IMR-90 (cell line): ENCODE measurements at regions of chr2 and their contacts with region 1.

Region 1: GRCh38 chr2:168346725-168347477 is 99.5 kb upstream of the STK39 start:
- DNase-seq: peak; percentile 63
- ATAC-seq: peak; percentile 91
- H3K4me3 ChIP-seq: peak overlapping the region; percentile 69
- H3K27ac ChIP-seq: peak overlapping the region; percentile 51; the same call in 1 of the 2 replicates
- H3K4me1 ChIP-seq: no peaks in the 10 kb centered on the region
- H3K27me3 ChIP-seq: no peaks in the 10 kb centered on the region; the same call in 1 of the 2 replicates
- CTCF ChIP-seq: peak; percentile 86
- POLR2A ChIP-seq: peak; percentile 28; the same call in 1 of the 2 replicates
- RAD21 ChIP-seq: peak; percentile 90

Region 2: GRCh38 chr2:168155046-168155445 is 191.9 kb before region 1 on chr2:
- CTCF ChIA-PET with region 1: no interaction called
- POLR2A ChIA-PET with region 1: no interaction called
- dilution Hi-C with region 1: no loop called
- in situ Hi-C with region 1: no loop called
- intact Hi-C with region 1: no loop called
- DNase-seq: peak; percentile 79
- ATAC-seq: peak; percentile 70
- H3K4me3 ChIP-seq: no peak overlapping the region
- H3K27ac ChIP-seq: peak overlapping the region; percentile 83; the same call in 1 of the 2 replicates
- H3K4me1 ChIP-seq: peaks cover 15% of the 10 kb centered on the region
- H3K27me3 ChIP-seq: no peaks in the 10 kb centered on the region
- CTCF ChIP-seq: no peak
- POLR2A ChIP-seq: no peak
- RAD21 ChIP-seq: no peak

Region 3: DNA sequence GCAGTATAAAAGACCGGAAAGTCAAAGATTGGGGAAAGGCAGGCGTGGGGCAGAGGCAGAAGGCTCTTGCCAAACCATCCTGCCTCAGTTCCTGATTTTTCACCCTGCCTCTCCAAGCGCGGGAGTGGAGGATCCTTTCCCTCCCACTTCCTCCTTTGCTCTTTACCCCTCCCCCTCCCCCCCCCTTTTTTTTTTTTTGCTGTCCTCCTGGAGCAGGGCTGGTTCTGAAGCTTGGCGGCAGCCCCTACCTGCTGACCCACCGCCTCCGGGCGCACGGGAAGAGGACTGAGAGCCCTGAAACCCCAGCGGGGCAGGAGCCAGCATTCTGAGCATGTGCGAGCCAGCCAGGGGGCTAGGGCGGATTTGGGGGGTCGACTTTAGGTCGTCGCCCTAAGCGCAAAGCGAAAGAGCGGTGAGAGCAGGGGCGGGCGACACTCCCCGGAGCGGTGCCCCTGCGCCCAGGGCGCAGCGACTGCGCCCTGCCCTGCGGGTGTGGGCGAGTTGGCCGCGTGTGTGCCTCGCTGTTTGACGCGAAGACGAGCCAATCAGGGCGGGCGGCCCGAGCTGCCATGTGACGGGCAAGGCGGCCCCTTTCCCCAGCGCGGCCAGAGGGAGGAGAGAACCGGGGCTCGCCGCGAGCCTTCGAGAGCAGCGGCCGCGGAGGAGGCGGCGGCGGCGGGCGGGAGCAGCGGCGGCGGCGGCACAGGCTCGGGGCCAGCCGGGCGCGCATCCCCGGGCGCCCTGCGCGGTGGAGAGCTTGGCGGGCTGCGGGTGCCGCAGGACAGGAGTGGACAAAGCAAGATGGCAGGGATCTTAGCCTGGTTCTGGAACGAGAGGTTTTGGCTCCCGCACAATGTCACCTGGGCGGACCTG is 109.0 kb after region 1 on chr2 and contains the start of gene CERS6:
- CTCF ChIA-PET with region 1: no interaction called
- POLR2A ChIA-PET with region 1: no interaction called
- dilution Hi-C with region 1: no loop called
- in situ Hi-C with region 1: no loop called
- intact Hi-C with region 1: loop called (anchors 5 kb)
- DNase-seq: peak; percentile 90
- ATAC-seq: peak; percentile 99
- H3K4me3 ChIP-seq: peak within 1 kb of the TSS; percentile 83
- H3K27ac ChIP-seq: peak within 1 kb of the TSS; percentile 52
- H3K4me1 ChIP-seq: no peaks in the 10 kb centered on the region
- H3K27me3 ChIP-seq: peaks cover 2% of the 10 kb centered on the region; the same call in 1 of the 2 replicates
- CTCF ChIP-seq: no peak
- POLR2A ChIP-seq: peak; percentile 58; the same call in 1 of the 2 replicates
- RAD21 ChIP-seq: no peak
- total RNA-seq, gene CERS6: 5.7 and 9.4 TPM in 2 replicates

Region 4: GRCh38 chr2:168705534-168706470 is 358.9 kb after region 1 on chr2:
- CTCF ChIA-PET with region 1: interaction called, 4 read pairs
- POLR2A ChIA-PET with region 1: no interaction called
- dilution Hi-C with region 1: no loop called
- in situ Hi-C with region 1: loop called (anchors 5 kb)
- intact Hi-C with region 1: loop called (anchors 1 kb)
- DNase-seq: peak; percentile 51
- ATAC-seq: peak; percentile 65
- H3K4me3 ChIP-seq: no peak overlapping the region
- H3K27ac ChIP-seq: no peak overlapping the region
- H3K4me1 ChIP-seq: no peaks in the 10 kb centered on the region
- H3K27me3 ChIP-seq: no peaks in the 10 kb centered on the region
- CTCF ChIP-seq: peak; percentile 51
- POLR2A ChIP-seq: no peak
- RAD21 ChIP-seq: peak; percentile 52

Region 5: DNA sequence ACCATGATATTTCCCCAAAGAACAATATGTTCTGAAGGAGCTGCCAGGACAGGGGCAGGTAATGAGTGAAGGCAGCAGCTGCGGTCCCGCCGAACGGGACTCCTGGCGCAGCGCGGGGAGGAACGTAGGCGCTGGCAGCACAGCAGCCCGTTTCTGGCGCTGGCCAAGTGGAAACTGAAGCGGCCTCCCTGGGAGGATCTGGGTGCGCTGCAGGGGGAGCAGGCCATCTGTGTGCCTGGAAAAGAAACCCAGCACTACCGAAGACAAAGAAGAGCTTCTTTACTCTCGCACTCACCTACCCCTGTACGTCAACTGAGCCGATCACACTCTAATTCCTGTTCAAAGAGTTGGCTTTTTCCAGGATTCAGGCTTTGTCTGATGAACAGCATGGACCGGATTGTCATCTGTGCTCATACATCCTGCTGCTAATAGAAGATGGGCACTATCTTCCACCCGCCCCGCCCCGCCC is 566.0 kb after region 1 on chr2:
- CTCF ChIA-PET with region 1: no interaction called
- POLR2A ChIA-PET with region 1: no interaction called
- dilution Hi-C with region 1: no loop called
- in situ Hi-C with region 1: loop called (anchors 5 kb)
- intact Hi-C with region 1: no loop called
- DNase-seq: peak; percentile 4
- ATAC-seq: peak; percentile 68
- H3K4me3 ChIP-seq: peak overlapping the region; percentile 15
- H3K27ac ChIP-seq: no peak overlapping the region
- H3K4me1 ChIP-seq: no peaks in the 10 kb centered on the region
- H3K27me3 ChIP-seq: peaks cover 16% of the 10 kb centered on the region
- CTCF ChIP-seq: no peak
- POLR2A ChIP-seq: no peak
- RAD21 ChIP-seq: no peak